GM18951 (cell line): ENCODE measurements at regions of chr12 and their contacts with region 1.

Region 1: DNA sequence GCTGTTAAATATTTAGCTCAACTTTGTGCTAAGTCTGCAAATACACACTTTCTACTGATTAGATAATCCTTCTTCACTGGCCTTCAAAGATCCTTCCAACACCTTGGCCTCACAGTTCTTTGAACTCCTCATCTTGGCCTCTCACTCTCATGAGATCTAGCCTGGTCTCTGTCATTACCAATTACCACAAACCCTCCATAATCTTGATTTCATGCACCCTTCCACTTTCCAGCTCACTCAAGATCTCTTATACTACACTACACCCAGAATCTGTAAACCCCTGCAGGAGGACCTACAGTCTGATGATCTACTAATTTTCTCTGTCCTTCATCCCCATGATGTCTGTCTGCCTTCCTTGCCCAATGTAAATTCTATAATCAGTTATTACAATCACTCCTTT is 71.1 kb downstream of the DUSP16 start:
- POLR2A ChIP-seq: no peak

Region 2: GRCh38 chr12:12338527-12339168 is 153.0 kb before region 1 on chr12:
- in situ Hi-C with region 1: no loop called
- POLR2A ChIP-seq: no peak

Region 3: GRCh38 chr12:12704593-12705230 is 213.1 kb after region 1 on chr12:
- in situ Hi-C with region 1: loop called (anchors 10 kb)
- POLR2A ChIP-seq: no peak